H1 (cell line): ENCODE measurements at regions of chr9 and their contacts with region 1.

Region 1: DNA sequence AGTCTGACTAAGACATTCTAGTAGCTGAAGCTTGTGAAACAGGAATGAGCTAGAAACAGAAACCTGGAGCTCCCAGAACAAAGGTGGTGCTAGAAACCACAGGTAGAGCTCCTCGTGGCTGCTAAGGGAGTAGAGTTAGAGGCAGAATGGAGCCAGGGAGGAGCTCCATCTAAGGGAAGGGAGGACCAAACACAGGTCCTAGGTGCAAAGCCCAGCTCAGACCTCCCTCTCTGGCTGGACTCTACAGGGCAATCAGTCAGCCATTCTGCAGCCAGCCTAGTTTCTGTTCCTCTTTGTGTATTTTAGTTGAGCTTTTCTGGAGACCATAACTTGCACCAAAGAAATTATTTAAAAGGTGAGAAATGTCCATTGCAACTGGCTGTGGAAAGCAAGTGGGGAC is 70.4 kb downstream of the CRB2 start:
- DNase-seq: no peak
- H3K4me3 ChIP-seq: no peak overlapping the region
- H3K27ac ChIP-seq: no peak overlapping the region
- H3K4me1 ChIP-seq: peaks cover 5 to 13% (median 11%) of the 10 kb centered on the region in 4 experiments
- H3K27me3 ChIP-seq: no peaks in the 10 kb centered on the region
- CTCF ChIP-seq: peak; percentile 15 to 36 (median 30); a peak in 3 of 4 replicates
- EP300 ChIP-seq: no peak
- POLR2A ChIP-seq: no peak
- RAD21 ChIP-seq: no peak

Region 2: GRCh38 chr9:123445981-123446610 is 19.7 kb after region 1 on chr9:
- CTCF ChIA-PET with region 1: interaction called, 14 read pairs
- POLR2A ChIA-PET with region 1: interaction called, 3 read pairs
- DNase-seq: no peak
- H3K4me3 ChIP-seq: no peak overlapping the region
- H3K27ac ChIP-seq: no peak overlapping the region
- H3K4me1 ChIP-seq: peaks cover 0 to 2% (median 0%) of the 10 kb centered on the region in 4 experiments; a peak in 2 of 7 replicates
- H3K27me3 ChIP-seq: no peaks in the 10 kb centered on the region
- CTCF ChIP-seq: no peak
- EP300 ChIP-seq: no peak
- POLR2A ChIP-seq: no peak
- RAD21 ChIP-seq: no peak

Region 3: DNA sequence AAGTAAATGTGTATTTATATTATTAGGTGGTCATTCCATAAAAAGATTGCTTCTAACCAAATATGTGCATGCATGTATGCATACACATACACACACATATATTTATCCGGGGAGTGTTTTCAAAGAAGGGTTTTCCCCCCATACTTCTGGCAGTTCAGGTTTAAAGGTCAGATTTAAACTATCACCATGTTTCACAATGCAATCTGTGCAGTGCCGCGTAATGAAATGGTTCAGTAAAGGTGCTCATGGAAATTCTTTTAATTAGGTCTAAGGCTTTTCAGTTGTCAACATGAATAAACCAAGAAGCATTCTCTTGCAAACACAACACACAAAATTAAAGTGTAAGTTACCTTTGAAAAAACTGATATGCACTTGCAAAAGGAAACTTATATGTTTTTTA is 140.6 kb after region 1 on chr9:
- CTCF ChIA-PET with region 1: no interaction called
- POLR2A ChIA-PET with region 1: no interaction called
- DNase-seq: no peak
- H3K4me3 ChIP-seq: no peak overlapping the region
- H3K27ac ChIP-seq: no peak overlapping the region
- H3K4me1 ChIP-seq: no peaks in the 10 kb centered on the region
- H3K27me3 ChIP-seq: no peaks in the 10 kb centered on the region
- CTCF ChIP-seq: no peak
- EP300 ChIP-seq: no peak
- POLR2A ChIP-seq: no peak
- RAD21 ChIP-seq: no peak